H1 (cell line): ENCODE measurements at regions of chr13 and their contacts with region 1.

Region 1: GRCh38 chr13:90867336-90867683 is 480.2 kb upstream of the MIR17HG start:
- DNase-seq: peak; percentile 39 to 80
- H3K4me3 ChIP-seq: no peak overlapping the region
- H3K27ac ChIP-seq: no peak overlapping the region
- H3K4me1 ChIP-seq: peaks cover 0 to under 1% (median 0%) of the 10 kb centered on the region in 4 experiments; a peak in 1 of 7 replicates
- H3K27me3 ChIP-seq: no peaks in the 10 kb centered on the region
- CTCF ChIP-seq: peak; percentile 53 to 80 (median 67)
- EP300 ChIP-seq: no peak
- POLR2A ChIP-seq: no peak
- RAD21 ChIP-seq: peak; percentile 87 to 91

Region 2: DNA sequence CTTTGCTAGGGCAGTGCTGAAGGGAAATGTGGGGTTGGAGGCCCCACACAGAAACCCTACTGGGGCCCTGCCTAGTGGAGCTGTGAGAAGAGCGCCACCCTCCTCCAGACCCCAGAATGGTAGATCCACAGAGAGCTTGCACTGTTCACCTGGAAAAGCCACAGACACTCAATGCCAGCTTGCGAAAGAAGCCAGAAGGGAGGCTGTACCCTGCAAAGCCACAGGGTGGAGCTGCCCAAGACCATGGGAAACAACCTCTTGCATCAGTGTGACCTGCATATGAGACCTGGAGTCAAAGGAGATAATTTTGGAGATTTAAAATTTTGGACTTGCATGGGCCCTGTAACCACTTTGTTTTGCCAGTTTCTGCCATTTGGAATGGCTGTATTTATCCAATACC is 135.3 kb before region 1 on chr13:
- CTCF ChIA-PET with region 1: interaction called, 18 read pairs
- POLR2A ChIA-PET with region 1: no interaction called
- DNase-seq: peak in 1 of 2 experiments; percentile 58
- H3K4me3 ChIP-seq: no peak overlapping the region
- H3K27ac ChIP-seq: no peak overlapping the region
- H3K4me1 ChIP-seq: no peaks in the 10 kb centered on the region
- H3K27me3 ChIP-seq: no peaks in the 10 kb centered on the region
- CTCF ChIP-seq: peak; percentile 35 to 63 (median 59)
- EP300 ChIP-seq: no peak
- POLR2A ChIP-seq: no peak
- RAD21 ChIP-seq: peak; percentile 47 to 56